ENCODE measurements at regions of chr12 and their contacts with region 1.

Region 1: GRCh38 chr12:54294152-54294952 is 6.5 kb downstream of the NFE2 start:
- DNase-seq: peak; percentile 59
- ATAC-seq: peak; percentile 74
- H3K4me3 ChIP-seq: no peak overlapping the region
- H3K4me3 Mint-ChIP-seq: no peak overlapping the region
- H3K27ac ChIP-seq: no peak overlapping the region
- H3K27ac Mint-ChIP-seq: no peak overlapping the region
- H3K4me1 ChIP-seq: peaks cover 15 to 18% of the 10 kb centered on the region in 2 donors
- H3K4me1 Mint-ChIP-seq: peaks cover 15% of the 10 kb centered on the region
- H3K27me3 ChIP-seq: peaks cover 0 to 16% (median 6%) of the 10 kb centered on the region in 4 experiments
- H3K27me3 Mint-ChIP-seq: peaks cover 15% of the 10 kb centered on the region
- CTCF ChIP-seq: peak; percentile 48

Region 2: DNA sequence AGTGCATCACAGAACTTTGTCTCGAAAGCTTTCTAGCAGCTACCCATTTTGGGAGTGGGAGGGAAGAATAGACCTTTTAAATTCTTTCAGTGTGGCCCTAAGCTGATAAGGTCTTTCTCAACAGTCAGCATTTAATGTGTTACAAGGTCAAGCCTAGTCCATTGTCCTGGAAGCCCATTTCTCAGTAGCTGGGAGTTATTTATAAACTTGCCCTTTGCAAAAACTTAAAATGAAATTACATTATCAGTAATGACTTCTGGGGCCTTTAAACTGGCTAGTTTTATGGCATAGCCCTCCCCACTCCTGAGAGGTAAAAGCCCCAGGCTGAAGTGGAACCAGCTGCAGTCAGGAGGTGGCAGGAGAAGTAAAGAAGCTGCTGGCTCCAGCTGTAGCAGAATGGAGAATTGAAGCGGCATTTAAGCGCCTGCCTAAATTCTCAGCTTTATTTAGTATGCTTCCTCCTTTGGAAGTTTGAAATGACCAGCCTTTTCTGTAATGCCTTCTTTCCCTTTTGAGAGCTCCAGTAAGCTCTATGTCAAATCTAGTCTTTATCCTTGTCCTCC is 43.0 kb after region 1 on chr12:
- CTCF ChIA-PET with region 1: interaction called, 13 read pairs
- POLR2A ChIA-PET with region 1: interaction called, 3 read pairs
- intact Hi-C with region 1: no loop called
- DNase-seq: no peak
- ATAC-seq: no peak
- H3K4me3 ChIP-seq: no peak overlapping the region
- H3K4me3 Mint-ChIP-seq: no peak overlapping the region
- H3K27ac ChIP-seq: no peak overlapping the region
- H3K27ac Mint-ChIP-seq: no peak overlapping the region
- H3K4me1 ChIP-seq: no peaks in the 10 kb centered on the region
- H3K4me1 Mint-ChIP-seq: peaks cover 11% of the 10 kb centered on the region
- H3K27me3 ChIP-seq: no peaks in the 10 kb centered on the region
- H3K27me3 Mint-ChIP-seq: no peaks in the 10 kb centered on the region
- CTCF ChIP-seq: no peak